AG04450 (cell line): ENCODE measurements at regions of chr2 and their contacts with region 1.

Region 1: DNA sequence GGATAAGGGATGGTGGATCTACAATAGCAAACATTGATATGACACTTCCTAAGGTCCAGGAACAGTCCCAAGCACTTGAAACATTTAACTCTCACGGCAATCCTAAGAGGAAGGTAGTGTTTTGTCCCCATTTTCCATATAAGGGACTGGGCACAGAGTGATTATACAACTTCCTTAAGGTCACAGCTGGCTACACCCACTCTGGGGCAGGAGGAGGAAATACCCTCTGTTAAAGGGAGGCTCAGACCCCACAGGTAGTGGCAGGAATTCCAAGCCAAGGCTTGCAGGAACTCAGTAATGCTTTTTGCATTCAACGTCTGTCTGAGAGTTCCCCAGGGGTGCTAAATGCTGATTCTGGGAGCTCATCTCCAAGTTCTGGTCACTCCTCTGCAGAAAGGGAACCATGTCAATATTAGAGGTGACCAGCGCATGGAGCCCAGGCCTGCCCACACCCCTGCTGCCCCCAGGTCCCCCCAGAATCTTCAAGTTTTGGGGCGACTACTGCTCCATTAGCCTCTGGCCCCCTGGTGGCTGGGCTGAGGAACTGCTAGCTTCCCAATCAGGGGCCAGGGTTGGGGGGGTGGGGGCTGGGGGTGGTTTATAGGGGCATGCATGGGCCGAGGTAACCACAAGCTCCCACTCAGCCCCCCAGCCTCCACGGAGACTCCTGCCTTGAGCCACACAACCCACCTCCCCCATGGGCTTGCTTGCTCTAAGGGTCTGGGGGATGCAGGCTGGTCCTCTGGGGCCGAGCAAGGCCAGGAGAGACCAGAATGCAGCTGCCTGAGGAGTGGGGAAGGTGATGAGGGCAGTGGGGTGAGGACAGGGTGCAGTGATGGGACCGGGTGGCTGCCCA is 11.1 kb downstream of the OBSL1 start:
- DNase-seq: no peak
- H3K4me3 ChIP-seq: no peak overlapping the region
- H3K27ac ChIP-seq: no peak overlapping the region
- H3K27me3 ChIP-seq: peaks cover 5% of the 10 kb centered on the region
- CTCF ChIP-seq: peak; percentile 65

Region 2: GRCh38 chr2:219543601-219544358 is 16.5 kb before region 1 on chr2 and contains the starts of genes CHPF and TMEM198:
- CTCF ChIA-PET with region 1: interaction called, 30 read pairs
- POLR2A ChIA-PET with region 1: interaction called, 5 read pairs
- DNase-seq: peak; percentile 95
- H3K4me3 ChIP-seq: peak within 1 kb of the TSS; percentile 75
- H3K27ac ChIP-seq: peak within 1 kb of the TSS; percentile 78
- H3K27me3 ChIP-seq: no peaks in the 10 kb centered on the region
- CTCF ChIP-seq: no peak
- polyA plus RNA-seq, gene CHPF: 24.4 and 37.2 TPM in 2 replicates
- polyA plus RNA-seq, gene TMEM198: 0.83 and 1.2 TPM in 2 replicates

Region 3: GRCh38 chr2:219571311-219572236 is 11.3 kb after region 1 on chr2 and contains the start of gene OBSL1:
- CTCF ChIA-PET with region 1: interaction called, 35 read pairs
- POLR2A ChIA-PET with region 1: interaction called, 13 read pairs
- DNase-seq: no peak
- H3K4me3 ChIP-seq: peak within 1 kb of the TSS; percentile 68
- H3K27ac ChIP-seq: peak within 1 kb of the TSS; percentile 21
- H3K27me3 ChIP-seq: peaks cover 22% of the 10 kb centered on the region
- CTCF ChIP-seq: no peak
- polyA plus RNA-seq, gene OBSL1: 35.5 and 46.8 TPM in 2 replicates

Region 4: GRCh38 chr2:219576493-219577388 is 16.5 kb after region 1 on chr2:
- CTCF ChIA-PET with region 1: interaction called, 35 read pairs
- POLR2A ChIA-PET with region 1: interaction called, 13 read pairs
- DNase-seq: no peak
- H3K4me3 ChIP-seq: no peak overlapping the region
- H3K27ac ChIP-seq: no peak overlapping the region
- H3K27me3 ChIP-seq: peaks cover 36% of the 10 kb centered on the region
- CTCF ChIP-seq: no peak

Region 5: DNA sequence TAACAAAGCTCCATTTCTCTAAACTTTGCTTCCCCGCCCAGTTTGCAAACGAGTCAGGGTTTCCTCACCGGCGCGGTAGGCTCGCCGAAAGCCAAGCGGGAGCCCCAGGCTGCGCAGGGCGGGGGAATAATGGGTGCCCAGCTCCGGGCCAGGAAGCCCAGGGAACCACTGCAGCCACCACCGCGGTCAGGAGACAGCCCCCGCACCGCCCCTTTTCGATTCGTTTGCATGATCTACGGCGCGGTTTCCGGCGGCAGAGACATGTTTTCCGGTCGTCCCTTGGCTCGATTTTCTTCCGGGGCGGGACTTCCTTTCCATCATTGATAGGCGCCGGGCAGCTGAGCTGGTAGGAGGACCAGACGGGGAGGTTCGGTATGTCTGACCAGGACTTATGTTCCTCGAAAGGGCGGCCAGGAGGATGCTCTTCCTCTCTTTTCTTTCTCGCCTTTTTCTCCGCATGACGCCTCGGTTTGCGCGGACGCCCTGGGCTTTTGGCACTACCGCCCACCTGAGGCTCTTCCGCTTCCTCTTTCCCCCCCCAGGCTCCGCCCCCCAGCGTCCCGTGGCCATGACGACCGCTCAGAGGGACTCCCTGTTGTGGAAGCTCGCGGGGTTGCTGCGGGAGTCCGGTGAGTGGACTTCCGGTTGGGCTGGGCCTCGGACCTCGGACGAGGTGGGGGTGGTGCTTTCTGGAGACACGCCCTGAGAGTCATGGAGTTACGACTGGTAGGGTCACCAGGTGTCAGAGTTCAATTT is 37.5 kb after region 1 on chr2 and contains the start of gene STK11IP:
- CTCF ChIA-PET with region 1: interaction called, 38 read pairs
- POLR2A ChIA-PET with region 1: interaction called, 7 read pairs
- DNase-seq: peak; percentile 90
- H3K4me3 ChIP-seq: peak within 1 kb of the TSS; percentile 94
- H3K27ac ChIP-seq: peak within 1 kb of the TSS; percentile 93
- H3K27me3 ChIP-seq: peaks cover 3% of the 10 kb centered on the region
- CTCF ChIP-seq: no peak
- polyA plus RNA-seq, gene STK11IP: 7.7 and 11.8 TPM in 2 replicates

Region 6: DNA sequence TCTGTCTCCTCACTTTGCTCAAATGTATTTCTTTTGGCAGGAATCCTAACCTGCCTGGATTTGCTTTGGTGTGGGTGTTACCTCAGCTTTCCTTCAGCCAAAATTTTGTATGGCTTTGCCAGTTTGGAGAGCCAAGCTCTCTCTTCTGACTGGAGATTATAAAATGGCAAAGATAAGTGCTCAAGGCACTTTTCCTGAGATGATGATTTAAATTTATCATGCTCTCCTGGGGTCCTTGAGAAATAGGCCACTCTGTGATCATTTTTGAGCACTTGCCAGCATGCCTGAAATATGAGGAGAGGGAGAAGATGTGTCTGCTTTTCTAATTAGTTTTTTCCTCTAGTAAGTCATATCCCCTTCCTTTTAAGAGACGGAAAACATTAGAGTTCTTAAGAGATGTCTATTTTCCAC is 750.2 kb after region 1 on chr2:
- CTCF ChIA-PET with region 1: no interaction called
- POLR2A ChIA-PET with region 1: no interaction called
- DNase-seq: no peak
- H3K4me3 ChIP-seq: no peak overlapping the region
- H3K27ac ChIP-seq: no peak overlapping the region
- H3K27me3 ChIP-seq: no peaks in the 10 kb centered on the region
- CTCF ChIP-seq: no peak